Mammary epithelial cell (primary cell): ENCODE measurements at regions of chr7 and their contacts with region 1.

Region 1: DNA sequence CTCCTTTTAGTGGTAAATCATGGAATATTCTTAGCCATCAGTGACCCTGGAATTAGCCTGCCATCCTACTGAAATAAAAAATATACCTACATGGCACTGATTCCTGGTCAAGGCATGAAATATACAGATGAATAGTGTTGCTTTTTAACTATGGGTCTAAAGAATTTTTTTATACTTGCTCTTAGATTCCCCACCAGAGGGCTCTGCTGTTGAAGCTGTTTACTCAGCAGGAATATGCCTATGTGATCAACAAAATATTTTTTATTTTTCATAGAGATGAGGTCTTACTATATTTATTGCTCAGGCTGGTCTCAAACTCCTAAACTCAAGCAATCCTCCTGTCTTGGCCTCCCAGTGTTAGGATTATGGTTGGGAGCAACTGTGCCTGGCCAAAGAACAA is 13.5 kb downstream of the ZC3HC1 start:
- DNase-seq: no peak
- H3K4me3 ChIP-seq: no peak overlapping the region
- H3K27ac ChIP-seq: no peak overlapping the region
- H3K4me1 ChIP-seq: no peaks in the 10 kb centered on the region
- H3K27me3 ChIP-seq: no peaks in the 10 kb centered on the region
- CTCF ChIP-seq: peak; percentile 22 to 42

Region 2: GRCh38 chr7:130758429-130759056 is 720.8 kb after region 1 on chr7:
- CTCF ChIA-PET with region 1: no interaction called
- dilution Hi-C with region 1: no loop called
- in situ Hi-C with region 1: no loop called
- intact Hi-C with region 1: loop called (anchors 1 kb)
- DNase-seq: peak; percentile 11
- H3K4me3 ChIP-seq: no peak overlapping the region
- H3K27ac ChIP-seq: no peak overlapping the region
- H3K4me1 ChIP-seq: no peaks in the 10 kb centered on the region
- H3K27me3 ChIP-seq: peaks cover 1% of the 10 kb centered on the region
- CTCF ChIP-seq: peak; percentile 57 to 65